ENCODE measurements at regions of chr6 and their contacts with region 1.

Region 1: DNA sequence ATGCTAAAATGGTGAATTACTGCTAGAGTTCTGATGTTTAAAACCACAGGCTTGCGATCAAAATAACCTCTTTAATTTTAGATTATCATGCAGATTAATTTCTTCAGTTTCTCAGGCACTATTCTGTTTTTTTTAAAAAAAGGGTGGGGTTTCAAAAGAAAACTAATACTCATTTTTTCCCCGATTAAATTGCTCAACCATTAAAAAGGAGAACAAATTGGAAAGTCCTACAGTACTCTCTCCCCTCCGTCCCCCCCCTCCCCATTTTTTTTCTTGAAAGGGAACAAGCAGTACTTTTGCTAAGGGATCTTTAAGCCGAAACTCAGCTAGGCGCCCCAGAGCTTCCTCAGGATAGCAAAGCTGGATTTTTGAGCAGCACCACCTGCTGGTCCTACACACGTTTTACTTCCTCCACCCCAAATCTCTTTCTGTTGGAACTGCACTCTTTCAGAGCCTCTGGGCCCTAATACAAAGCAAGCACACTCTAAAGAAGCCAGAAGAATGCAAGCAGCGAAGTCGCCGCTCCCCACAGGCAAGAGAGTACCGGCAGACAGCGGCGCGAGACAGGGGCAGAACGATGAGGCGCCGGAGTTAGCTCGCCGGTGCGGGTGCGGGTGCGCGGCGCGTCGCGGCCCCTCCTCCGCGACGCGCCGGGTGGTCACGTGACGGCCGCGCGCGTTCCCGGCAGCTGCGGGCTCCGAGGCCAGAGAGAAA is at the start of gene RNF146:
- DNase-seq: peak; percentile 82
- ATAC-seq: peak; percentile 77
- H3K4me3 Mint-ChIP-seq: peak within 1 kb of the TSS; percentile 93
- H3K27ac Mint-ChIP-seq: peak within 1 kb of the TSS; percentile 100
- H3K4me1 Mint-ChIP-seq: peaks cover 28% of the 10 kb centered on the region
- H3K27me3 Mint-ChIP-seq: no peaks in the 10 kb centered on the region
- total RNA-seq, gene RNF146: 14.2 to 14.4 TPM

Region 2: GRCh38 chr6:125790358-125791150 is 1475.8 kb before region 1 on chr6 and contains the start of gene NCOA7:
- CTCF ChIA-PET with region 1: no interaction called
- POLR2A ChIA-PET with region 1: no interaction called
- intact Hi-C with region 1: loop called in 1 of 2 experiments (anchors 5 kb)
- DNase-seq: peak; percentile 89
- ATAC-seq: peak; percentile 76
- H3K4me3 Mint-ChIP-seq: peak within 1 kb of the TSS; percentile 96
- H3K27ac Mint-ChIP-seq: peak within 1 kb of the TSS; percentile 95
- H3K4me1 Mint-ChIP-seq: peaks cover 52% of the 10 kb centered on the region
- H3K27me3 Mint-ChIP-seq: no peaks in the 10 kb centered on the region
- total RNA-seq, gene NCOA7: 54.3 to 67.4 TPM

Region 3: DNA sequence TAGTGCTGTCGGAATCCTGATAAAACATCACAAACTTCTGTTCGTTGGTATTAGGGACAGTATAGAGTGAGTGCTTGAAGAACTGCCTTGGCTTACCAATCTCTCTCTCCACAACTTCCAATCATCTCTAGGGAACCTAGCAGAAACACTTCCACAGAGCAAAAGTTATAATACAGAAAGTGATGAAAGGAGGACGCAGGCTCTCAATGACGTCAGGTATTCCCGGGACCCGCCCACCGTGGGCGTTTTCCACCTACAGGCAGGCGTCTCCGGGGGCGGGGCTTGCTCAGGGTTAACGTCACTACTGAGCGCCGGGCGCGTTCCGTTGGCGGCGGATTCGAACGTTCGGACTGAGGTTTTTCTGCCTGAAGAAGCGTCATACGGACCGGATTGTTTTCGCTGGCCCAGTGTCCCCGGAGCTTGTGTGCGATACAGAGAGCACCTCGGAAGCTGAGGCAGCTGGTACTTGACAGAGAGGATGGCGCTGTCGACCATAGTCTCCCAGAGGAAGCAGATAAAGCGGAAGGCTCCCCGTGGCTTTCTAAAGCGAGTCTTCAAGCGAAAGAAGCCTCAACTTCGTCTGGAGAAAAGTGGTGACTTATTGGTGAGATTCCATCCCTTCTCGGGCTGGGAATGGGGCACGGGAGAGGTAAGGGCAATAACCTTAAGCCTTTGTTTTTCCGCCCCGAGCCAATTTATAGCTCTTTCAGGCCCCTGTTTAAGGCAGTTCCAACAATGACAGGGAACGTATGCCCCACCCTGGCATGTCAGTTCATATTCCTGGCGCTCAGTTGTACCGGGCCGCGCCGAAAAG is 926.3 kb before region 1 on chr6 and contains the start of gene CENPW:
- CTCF ChIA-PET with region 1: no interaction called
- POLR2A ChIA-PET with region 1: no interaction called
- intact Hi-C with region 1: loop called in 1 of 2 experiments (anchors 10 kb)
- DNase-seq: peak; percentile 97
- ATAC-seq: peak; percentile 92
- H3K4me3 Mint-ChIP-seq: no peak within 1 kb of the TSS
- H3K27ac Mint-ChIP-seq: no peak within 1 kb of the TSS
- H3K4me1 Mint-ChIP-seq: peaks cover 13% of the 10 kb centered on the region
- H3K27me3 Mint-ChIP-seq: no peaks in the 10 kb centered on the region
- total RNA-seq, gene CENPW: 44.1 to 63.6 TPM

Region 4: DNA sequence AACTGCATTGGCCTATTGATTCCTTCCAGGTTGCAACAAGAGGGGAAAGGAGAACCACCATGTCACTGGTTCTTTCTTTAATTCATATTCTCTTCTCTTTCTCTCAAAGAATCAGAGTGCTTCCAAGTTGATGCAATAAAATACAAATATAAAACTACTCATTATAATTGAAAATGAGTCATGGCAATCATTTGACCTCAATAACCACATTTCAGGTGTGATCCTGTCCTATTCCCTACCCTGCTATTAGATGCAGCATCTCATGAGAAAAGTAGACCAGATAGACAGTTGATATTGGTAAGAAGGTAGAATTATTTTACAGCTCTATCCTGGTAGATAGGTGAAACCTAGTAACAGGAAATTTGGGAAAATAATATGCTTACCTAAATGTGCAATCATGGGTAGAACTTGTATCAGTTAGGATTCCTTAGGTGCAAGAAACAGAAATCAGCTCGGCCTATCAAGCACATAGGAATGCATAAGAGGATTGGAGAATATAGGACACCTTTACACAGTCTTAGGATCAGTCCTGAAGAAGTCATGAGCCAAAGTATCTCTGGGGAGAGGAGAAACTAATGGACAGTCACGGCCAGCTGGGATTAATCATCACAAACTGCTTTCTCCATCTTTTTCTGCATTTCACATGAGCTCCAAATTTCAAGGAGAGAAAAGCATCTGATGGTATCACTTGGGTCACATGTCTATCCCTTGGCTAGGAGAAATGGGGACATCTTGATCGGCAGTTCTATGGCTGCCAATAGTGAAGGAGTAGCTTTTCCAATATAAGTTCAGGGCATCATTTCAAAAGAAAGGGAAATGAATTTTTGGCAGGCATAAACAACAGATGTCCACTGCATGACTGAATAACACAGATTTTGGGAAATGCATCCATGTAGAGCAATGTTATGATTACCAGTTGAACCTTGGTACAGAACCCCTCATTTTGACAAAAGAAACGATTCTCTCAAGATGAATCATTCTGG is 18.9 kb before region 1 on chr6:
- CTCF ChIA-PET with region 1: interaction called, 11 read pairs
- POLR2A ChIA-PET with region 1: no interaction called
- intact Hi-C with region 1: no loop called
- DNase-seq: no peak
- ATAC-seq: no peak
- H3K4me3 Mint-ChIP-seq: no peak overlapping the region
- H3K27ac Mint-ChIP-seq: no peak overlapping the region
- H3K4me1 Mint-ChIP-seq: no peaks in the 10 kb centered on the region
- H3K27me3 Mint-ChIP-seq: peaks cover 2% of the 10 kb centered on the region

Region 5: DNA sequence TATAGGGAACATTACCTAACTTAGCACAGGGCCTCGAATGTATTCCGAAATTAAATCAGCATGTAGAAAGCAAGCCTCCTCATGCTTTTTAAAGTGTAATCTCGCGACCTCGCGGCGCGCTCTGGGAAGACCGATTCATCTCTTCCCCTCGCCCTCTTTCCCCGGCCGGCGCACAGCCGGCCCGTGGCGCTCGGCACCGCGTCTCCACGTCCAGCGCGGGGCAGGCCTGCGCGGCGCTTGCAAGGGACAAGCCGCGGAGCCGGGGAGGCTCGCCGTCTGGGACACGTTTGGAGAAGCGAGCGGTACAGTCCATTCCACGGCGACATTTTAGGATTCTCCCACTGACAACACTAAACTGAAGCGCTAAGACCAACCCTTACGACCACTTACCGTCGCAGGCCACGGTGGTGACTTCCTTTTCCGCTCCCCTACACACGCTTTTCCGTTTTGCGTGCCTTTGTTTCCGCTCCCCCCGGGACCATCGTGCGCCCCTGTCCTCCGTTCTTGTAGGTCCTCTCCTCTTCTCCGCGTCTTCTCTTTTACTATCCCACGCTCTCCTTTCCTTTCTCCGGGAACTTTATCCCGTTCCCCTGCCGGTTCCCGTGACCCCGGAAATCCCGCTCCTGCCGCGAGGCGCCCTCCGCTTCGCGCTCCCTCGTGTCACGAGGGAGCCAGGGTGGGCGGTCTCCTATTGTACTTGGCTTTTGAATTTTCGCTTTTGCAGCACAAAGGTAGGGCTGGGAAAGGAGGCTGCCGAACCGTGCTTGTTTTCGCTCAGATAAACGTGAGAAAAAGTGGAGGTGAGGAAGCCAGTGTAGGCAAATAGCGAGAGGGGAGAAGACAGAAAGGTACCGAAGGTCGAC is 76.8 kb after region 1 on chr6 and contains the start of gene ECHDC1:
- CTCF ChIA-PET with region 1: interaction called, 3 read pairs
- POLR2A ChIA-PET with region 1: no interaction called
- intact Hi-C with region 1: loop called (anchors 1 to 2 kb)
- DNase-seq: peak; percentile 85
- ATAC-seq: peak; percentile 85
- H3K4me3 Mint-ChIP-seq: no peak within 1 kb of the TSS
- H3K27ac Mint-ChIP-seq: no peak within 1 kb of the TSS
- H3K4me1 Mint-ChIP-seq: peaks cover 19% of the 10 kb centered on the region
- H3K27me3 Mint-ChIP-seq: no peaks in the 10 kb centered on the region
- total RNA-seq, gene ECHDC1: 31.1 to 48.2 TPM

Region 6: GRCh38 chr6:127516666-127517273 is 250.4 kb after region 1 on chr6:
- CTCF ChIA-PET with region 1: interaction called, 6 read pairs
- POLR2A ChIA-PET with region 1: no interaction called
- intact Hi-C with region 1: loop called in 1 of 2 experiments (anchors 1 kb)
- DNase-seq: peak; percentile 69
- ATAC-seq: peak; percentile 59
- H3K4me3 Mint-ChIP-seq: peak overlapping the region; percentile 87
- H3K27ac Mint-ChIP-seq: peak overlapping the region; percentile 58
- H3K4me1 Mint-ChIP-seq: peaks cover 40% of the 10 kb centered on the region
- H3K27me3 Mint-ChIP-seq: peaks cover 49% of the 10 kb centered on the region

Region 7: GRCh38 chr6:128336436-128337095 is 1070.2 kb after region 1 on chr6:
- CTCF ChIA-PET with region 1: no interaction called
- POLR2A ChIA-PET with region 1: no interaction called
- intact Hi-C with region 1: no loop called
- DNase-seq: no peak
- ATAC-seq: no peak
- H3K4me3 Mint-ChIP-seq: no peak overlapping the region
- H3K27ac Mint-ChIP-seq: no peak overlapping the region
- H3K4me1 Mint-ChIP-seq: no peaks in the 10 kb centered on the region
- H3K27me3 Mint-ChIP-seq: no peaks in the 10 kb centered on the region